ENCODE measurements at regions of chr10 and their contacts with region 1.

Region 1: DNA sequence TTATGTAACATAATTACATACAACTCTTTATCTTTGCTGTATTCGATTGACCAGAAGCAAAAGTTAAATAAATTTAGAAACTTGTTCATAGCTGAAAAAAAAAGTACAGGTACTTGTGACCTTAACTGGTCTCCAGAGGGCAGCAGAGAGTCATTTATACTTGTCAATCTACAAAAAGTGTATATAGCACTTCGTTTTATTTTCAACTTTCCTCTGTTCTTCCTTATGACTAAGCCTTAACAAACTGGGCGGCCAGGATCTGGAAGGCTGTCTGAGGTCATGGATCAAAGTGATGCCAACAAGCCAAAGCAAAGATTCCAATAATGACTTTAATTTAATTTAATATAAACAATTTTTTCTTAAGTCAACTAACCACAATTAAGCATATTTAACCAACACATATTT is 29.8 kb downstream of the C10orf67 start:
- DNase-seq: peak; percentile 63
- H3K4me3 ChIP-seq: no peak overlapping the region
- H3K27ac ChIP-seq: no peak overlapping the region
- H3K4me1 ChIP-seq: no peaks in the 10 kb centered on the region
- H3K27me3 ChIP-seq: no peaks in the 10 kb centered on the region
- CTCF ChIP-seq: peak; percentile 34 to 40
- POLR2A ChIP-seq: no peak

Region 2: DNA sequence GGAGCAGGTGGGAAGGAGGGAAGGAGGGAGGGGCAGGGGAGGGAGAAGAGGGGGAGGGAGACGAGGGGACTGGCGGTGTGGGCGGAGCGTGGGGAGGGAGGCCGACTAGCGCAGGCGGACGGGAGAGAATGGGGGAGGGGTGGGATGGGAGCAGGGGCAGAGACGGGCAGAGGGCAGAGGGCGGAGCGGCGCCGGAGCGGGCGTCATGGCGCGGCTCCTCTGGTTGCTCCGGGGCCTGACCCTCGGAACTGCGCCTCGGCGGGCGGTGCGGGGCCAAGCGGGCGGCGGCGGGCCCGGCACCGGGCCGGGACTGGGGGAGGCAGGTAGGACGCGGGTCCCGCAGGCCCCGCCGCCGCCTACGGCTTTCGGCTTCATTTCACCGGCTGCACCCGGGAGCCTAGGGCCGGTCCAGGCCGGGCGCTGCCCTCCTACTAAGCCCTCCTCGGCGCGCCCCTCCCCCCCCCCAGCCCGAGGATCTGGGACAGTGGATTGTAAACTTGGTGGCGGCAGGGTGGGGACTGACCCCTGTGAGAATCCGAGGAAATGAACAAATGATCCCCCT is 219.4 kb before region 1 on chr10 and contains the start of gene MSRB2:
- CTCF ChIA-PET with region 1: no interaction called
- POLR2A ChIA-PET with region 1: no interaction called
- dilution Hi-C with region 1: no loop called
- intact Hi-C with region 1: no loop called
- DNase-seq: peak; percentile 90
- H3K4me3 ChIP-seq: peak within 1 kb of the TSS; percentile 52 to 91 (median 84)
- H3K27ac ChIP-seq: peak within 1 kb of the TSS; percentile 25
- H3K4me1 ChIP-seq: peaks cover 18% of the 10 kb centered on the region
- H3K27me3 ChIP-seq: peaks cover 1 to 10% of the 10 kb centered on the region in 2 experiments
- CTCF ChIP-seq: no peak
- POLR2A ChIP-seq: peak; percentile 89
- total RNA-seq, gene MSRB2: 16.2 and 19.4 TPM in 2 replicates

Region 3: DNA sequence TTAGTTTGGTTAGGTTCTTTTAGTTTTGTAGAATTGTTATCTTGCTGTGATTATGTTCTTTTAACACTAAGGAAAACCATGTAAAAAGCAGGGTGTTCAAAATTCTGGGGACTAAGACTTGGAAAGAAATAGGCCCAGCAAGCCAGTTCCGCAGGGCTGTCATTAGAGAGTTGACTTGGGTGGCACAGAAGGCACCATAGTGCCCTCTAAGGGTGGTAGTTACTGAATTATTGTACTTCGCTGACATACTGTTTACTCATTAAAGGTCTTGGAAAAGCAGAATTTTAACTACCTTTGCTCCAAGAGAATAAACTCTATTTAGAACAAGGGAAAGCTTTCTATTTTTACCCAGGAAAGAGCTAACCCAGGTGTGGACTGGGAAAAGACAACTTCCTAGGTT is 210.6 kb after region 1 on chr10:
- CTCF ChIA-PET with region 1: interaction called, 11 read pairs
- POLR2A ChIA-PET with region 1: no interaction called
- dilution Hi-C with region 1: no loop called
- intact Hi-C with region 1: loop called (anchors 1 kb)
- DNase-seq: no peak
- H3K4me3 ChIP-seq: no peak overlapping the region
- H3K27ac ChIP-seq: no peak overlapping the region
- H3K4me1 ChIP-seq: no peaks in the 10 kb centered on the region
- H3K27me3 ChIP-seq: no peaks in the 10 kb centered on the region
- CTCF ChIP-seq: peak in 1 of 2 donors; percentile 6
- POLR2A ChIP-seq: no peak

Region 4: DNA sequence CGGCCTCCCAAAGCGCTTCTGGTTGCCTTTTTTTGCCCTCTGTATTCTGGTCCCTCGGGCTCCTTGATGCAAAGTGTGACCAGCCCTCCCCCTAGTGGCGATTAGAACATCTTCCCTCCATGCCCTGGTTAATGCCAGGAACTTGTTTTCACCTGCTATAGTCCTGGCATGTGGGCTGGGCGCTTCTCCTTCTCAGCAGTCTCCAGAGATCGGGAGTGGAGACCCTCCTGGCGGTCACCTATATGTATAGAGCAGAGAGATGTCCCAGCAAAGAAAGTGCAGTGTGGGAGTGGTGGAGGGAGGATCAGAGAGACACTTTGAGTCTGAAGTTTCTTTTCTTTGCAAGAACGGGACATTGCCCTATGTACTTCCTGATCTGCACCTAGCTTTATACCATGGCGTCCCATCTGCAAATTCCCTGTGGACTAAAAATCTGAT is 388.2 kb after region 1 on chr10:
- CTCF ChIA-PET with region 1: interaction called, 11 read pairs
- POLR2A ChIA-PET with region 1: no interaction called
- dilution Hi-C with region 1: no loop called
- intact Hi-C with region 1: no loop called
- DNase-seq: peak; percentile 18
- H3K4me3 ChIP-seq: no peak overlapping the region
- H3K27ac ChIP-seq: no peak overlapping the region
- H3K4me1 ChIP-seq: no peaks in the 10 kb centered on the region
- H3K27me3 ChIP-seq: no peaks in the 10 kb centered on the region
- CTCF ChIP-seq: peak; percentile 35 to 59
- POLR2A ChIP-seq: no peak

Region 5: DNA sequence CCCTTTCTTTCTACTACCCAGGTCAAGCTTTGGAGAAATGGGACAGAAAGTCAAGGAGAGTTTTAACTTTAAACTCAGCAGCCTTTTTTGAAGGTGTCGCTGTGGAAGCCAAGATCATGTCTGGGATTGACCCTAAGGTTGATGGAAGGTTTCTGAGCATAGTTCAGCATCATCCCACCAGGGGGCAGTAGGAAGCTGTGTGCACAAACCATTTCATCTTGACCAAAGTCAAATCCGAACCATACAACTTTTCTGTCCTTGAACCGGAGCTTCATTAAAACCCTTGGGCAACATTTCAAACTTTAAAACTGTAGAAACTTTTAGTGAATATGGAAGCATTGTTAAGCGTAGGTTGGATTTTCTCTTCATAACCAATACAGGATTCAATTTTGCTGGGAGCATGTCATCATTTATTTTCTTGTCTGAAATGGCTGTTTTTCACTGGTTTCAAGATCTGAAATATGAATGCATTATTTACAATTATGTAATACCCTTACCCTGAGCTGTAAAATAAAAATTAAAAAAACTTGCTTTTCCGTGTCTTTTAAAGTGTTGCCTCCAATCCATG is 679.7 kb after region 1 on chr10:
- CTCF ChIA-PET with region 1: no interaction called
- POLR2A ChIA-PET with region 1: no interaction called
- dilution Hi-C with region 1: no loop called
- intact Hi-C with region 1: loop called (anchors 10 kb)
- DNase-seq: peak; percentile 4
- H3K4me3 ChIP-seq: no peak overlapping the region
- H3K27ac ChIP-seq: no peak overlapping the region
- H3K4me1 ChIP-seq: no peaks in the 10 kb centered on the region
- H3K27me3 ChIP-seq: no peaks in the 10 kb centered on the region
- CTCF ChIP-seq: peak; percentile 61
- POLR2A ChIP-seq: no peak

Region 6: GRCh38 chr10:24201503-24202180 is 886.8 kb after region 1 on chr10:
- CTCF ChIA-PET with region 1: interaction called, 37 read pairs
- POLR2A ChIA-PET with region 1: no interaction called
- dilution Hi-C with region 1: no loop called
- intact Hi-C with region 1: loop called (anchors 1 kb)
- DNase-seq: no peak
- H3K4me3 ChIP-seq: no peak overlapping the region
- H3K27ac ChIP-seq: no peak overlapping the region
- H3K4me1 ChIP-seq: no peaks in the 10 kb centered on the region
- H3K27me3 ChIP-seq: no peaks in the 10 kb centered on the region
- CTCF ChIP-seq: no peak
- POLR2A ChIP-seq: no peak

Region 7: GRCh38 chr10:24518981-24519597 is 1204.3 kb after region 1 on chr10:
- CTCF ChIA-PET with region 1: interaction called, 26 read pairs
- POLR2A ChIA-PET with region 1: no interaction called
- dilution Hi-C with region 1: no loop called
- intact Hi-C with region 1: loop called (anchors 2 kb)
- DNase-seq: peak; percentile 50
- H3K4me3 ChIP-seq: no peak overlapping the region
- H3K27ac ChIP-seq: no peak overlapping the region
- H3K4me1 ChIP-seq: no peaks in the 10 kb centered on the region
- H3K27me3 ChIP-seq: no peaks in the 10 kb centered on the region
- CTCF ChIP-seq: peak; percentile 72 to 76
- POLR2A ChIP-seq: no peak

Region 8: GRCh38 chr10:24556750-24557742 is 1242.2 kb after region 1 on chr10:
- CTCF ChIA-PET with region 1: interaction called, 17 read pairs
- POLR2A ChIA-PET with region 1: no interaction called
- dilution Hi-C with region 1: no loop called
- intact Hi-C with region 1: no loop called
- DNase-seq: peak; percentile 59
- H3K4me3 ChIP-seq: no peak overlapping the region
- H3K27ac ChIP-seq: no peak overlapping the region
- H3K4me1 ChIP-seq: peaks cover 2% of the 10 kb centered on the region
- H3K27me3 ChIP-seq: no peaks in the 10 kb centered on the region
- CTCF ChIP-seq: peak; percentile 60 to 61
- POLR2A ChIP-seq: no peak